ENCODE measurements at regions of chr12 and their contacts with region 1.

Region 1: DNA sequence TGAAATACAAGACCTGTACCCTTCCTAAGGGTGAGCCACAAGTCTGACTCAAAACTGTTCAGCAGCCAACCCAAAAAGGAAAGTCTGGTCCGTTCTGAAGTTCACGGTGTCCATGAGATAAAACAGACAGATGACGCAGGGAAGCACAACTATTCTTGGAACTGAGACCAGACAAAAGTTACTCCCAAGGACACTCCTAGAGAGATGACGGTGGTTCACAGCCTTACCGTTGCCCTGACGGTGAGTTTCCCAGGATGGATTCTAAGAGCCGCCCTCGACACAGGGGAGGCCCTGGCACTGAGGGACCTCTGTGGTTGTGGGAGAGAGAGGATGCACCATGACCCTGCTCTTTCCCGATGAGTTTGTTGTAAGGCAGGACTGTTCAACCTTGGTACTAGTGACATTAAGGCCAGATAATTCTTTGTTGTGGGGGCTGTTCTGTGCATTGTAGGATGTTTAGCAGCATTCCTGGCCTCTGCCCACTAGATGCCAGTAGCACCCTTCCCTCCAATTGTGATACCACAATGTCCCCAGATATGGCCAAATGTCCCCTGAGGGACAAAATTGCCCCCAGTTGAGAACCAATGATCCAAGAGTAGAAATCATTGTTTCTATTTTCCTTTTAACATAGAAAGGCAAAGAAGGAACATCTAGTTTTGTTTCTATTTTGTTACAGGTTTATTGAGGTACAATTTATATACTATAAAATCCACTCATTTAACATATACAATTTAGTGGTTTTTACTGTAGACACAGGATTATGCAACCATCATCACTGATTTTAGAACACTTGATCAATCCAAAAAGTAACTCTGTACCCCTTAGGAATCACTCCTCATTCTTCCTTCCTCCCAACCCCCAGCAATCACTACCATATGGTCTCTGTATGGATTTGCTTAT is 23.0 kb downstream of the OR10P1 start:
- DNase-seq: peak in 1 of 2 experiments; percentile 47
- ATAC-seq: peak; percentile 58 to 85; a peak in 4 of 6 replicates
- H3K4me3 ChIP-seq: no peak overlapping the region
- H3K27ac ChIP-seq: no peak overlapping the region
- H3K4me1 ChIP-seq: no peaks in the 10 kb centered on the region
- CTCF ChIP-seq: peak; percentile 72
- EP300 ChIP-seq: no peak
- POLR2A ChIP-seq: no peak
- RAD21 ChIP-seq: peak; percentile 77 to 86

Region 2: GRCh38 chr12:55647027-55647426 is 12.7 kb before region 1 on chr12:
- CTCF ChIA-PET with region 1: interaction called, 17 read pairs
- POLR2A ChIA-PET with region 1: no interaction called
- DNase-seq: no peak
- ATAC-seq: no peak
- H3K4me3 ChIP-seq: no peak overlapping the region
- H3K27ac ChIP-seq: no peak overlapping the region
- H3K4me1 ChIP-seq: no peaks in the 10 kb centered on the region
- CTCF ChIP-seq: no peak
- EP300 ChIP-seq: no peak
- POLR2A ChIP-seq: no peak
- RAD21 ChIP-seq: no peak

Region 3: GRCh38 chr12:55728939-55729823 is 69.4 kb after region 1 on chr12 and contains the start of gene CD63:
- CTCF ChIA-PET with region 1: interaction called, 13 read pairs
- POLR2A ChIA-PET with region 1: no interaction called
- DNase-seq: peak; percentile 91 to 98
- ATAC-seq: peak; percentile 78 to 87
- H3K4me3 ChIP-seq: peak within 1 kb of the TSS; percentile 76
- H3K27ac ChIP-seq: peak within 1 kb of the TSS; percentile 97
- H3K4me1 ChIP-seq: peaks cover 34% of the 10 kb centered on the region
- CTCF ChIP-seq: no peak
- EP300 ChIP-seq: peak in 1 of 2 experiments; percentile 26; a peak in 1 of 5 replicates
- POLR2A ChIP-seq: peak; percentile 46
- RAD21 ChIP-seq: no peak
- polyA plus RNA-seq, gene CD63: 512 and 724 TPM in 2 replicates

Measured in A549 (cell line).